ENCODE measurements at regions of chr2 and their contacts with region 1.

Region 1: DNA sequence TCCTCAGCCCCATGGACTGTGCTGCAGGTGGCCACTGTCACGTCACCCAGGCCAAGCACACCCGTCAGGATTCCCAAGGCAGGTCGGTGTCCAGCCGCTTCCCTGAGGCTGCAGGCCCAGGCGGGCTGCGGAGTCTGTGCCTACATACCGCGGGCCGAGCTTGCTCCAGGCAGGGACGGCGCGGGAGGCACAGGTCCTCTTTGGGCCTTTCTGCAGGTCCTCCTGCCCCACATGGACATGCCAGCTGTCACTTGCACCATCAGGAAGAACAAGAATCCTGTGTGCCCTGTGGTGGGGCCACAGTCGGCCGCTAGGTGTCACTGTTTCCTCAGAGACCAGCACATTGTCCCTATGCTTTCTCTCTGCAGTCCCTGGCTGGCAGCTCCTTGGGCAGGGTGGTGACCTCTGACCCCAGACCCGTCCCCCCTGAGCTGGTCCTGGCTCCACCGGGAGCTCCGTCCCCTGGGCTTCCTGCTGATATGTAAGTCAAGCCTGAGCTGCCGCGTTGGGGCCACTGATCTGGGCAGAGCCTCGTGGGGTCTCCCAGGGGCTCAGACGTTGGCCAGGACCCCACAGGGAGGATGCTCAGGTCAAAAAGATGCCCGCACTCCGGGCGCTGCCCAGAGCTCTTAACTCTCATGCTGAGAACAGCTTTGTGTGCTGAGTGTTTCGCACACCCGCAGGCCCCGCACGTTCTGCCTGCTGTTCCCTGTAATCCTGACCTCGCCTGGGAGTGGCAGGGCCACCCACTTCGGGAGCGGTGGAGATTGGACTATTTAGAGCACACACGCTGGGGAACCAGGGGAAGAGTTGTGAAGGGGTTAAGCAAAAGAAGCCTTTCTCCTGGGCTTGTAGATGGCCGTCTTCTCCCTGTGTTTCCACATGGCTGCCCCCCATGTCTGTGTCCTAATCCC is 17.3 kb upstream of the AGXT start:
- DNase-seq: no peak
- H3K4me3 ChIP-seq: no peak overlapping the region
- H3K27me3 ChIP-seq: no peaks in the 10 kb centered on the region
- CTCF ChIP-seq: peak; percentile 94

Region 2: DNA sequence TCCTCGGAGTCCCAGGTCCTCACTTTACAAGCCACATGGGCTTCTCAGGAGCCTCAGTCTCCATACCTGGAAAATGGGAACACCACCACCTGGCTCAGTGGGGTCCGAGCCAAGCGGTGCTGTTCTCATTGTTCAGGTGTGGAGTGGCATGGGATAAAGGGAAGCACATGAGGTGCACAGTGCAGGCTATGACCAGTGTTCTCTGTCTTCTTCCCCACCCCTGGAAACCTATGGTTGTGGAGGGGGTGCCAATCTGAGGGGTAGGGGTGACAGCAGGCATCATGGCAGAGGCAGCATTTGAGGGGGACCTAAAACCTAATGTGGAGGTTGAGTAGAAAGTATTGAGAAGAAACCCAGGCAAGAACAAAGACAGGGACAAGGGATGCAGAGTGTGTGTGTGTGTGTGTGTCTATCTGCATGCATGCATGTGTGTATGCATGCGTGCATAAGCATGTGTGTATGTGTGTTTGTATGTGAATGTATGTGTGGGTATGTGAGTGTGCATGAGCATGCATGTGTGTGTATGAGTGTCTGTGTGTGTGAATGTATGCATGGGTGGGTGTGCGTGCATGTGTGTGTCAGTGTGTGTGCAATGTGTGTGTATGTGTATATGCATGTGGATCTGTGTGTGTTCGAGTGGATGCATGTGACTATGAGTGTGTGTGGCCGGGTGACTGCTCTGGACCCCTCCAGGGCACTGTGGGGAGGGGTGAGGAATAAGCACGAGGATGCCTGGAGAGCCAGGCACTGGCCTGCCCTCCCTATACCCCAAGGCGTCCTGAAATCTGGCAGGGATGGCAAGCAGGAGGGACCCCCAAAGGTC is 35.4 kb before region 1 on chr2:
- CTCF ChIA-PET with region 1: no interaction called
- POLR2A ChIA-PET with region 1: no interaction called
- DNase-seq: no peak
- H3K4me3 ChIP-seq: no peak overlapping the region
- H3K27me3 ChIP-seq: peaks cover 10% of the 10 kb centered on the region
- CTCF ChIP-seq: no peak

Region 3: GRCh38 chr2:240861554-240861953 is 10.2 kb after region 1 on chr2:
- CTCF ChIA-PET with region 1: interaction called, 18 read pairs
- POLR2A ChIA-PET with region 1: no interaction called
- DNase-seq: no peak
- H3K4me3 ChIP-seq: no peak overlapping the region
- H3K27me3 ChIP-seq: peaks cover 8% of the 10 kb centered on the region
- CTCF ChIP-seq: no peak

Region 4: GRCh38 chr2:240868286-240869108 is 17.2 kb after region 1 on chr2 and contains the start of gene AGXT:
- CTCF ChIA-PET with region 1: interaction called, 17 read pairs
- POLR2A ChIA-PET with region 1: no interaction called
- DNase-seq: peak; percentile 14
- H3K4me3 ChIP-seq: no peak within 1 kb of the TSS
- H3K27me3 ChIP-seq: peaks cover 4% of the 10 kb centered on the region
- CTCF ChIP-seq: no peak
- polyA plus RNA-seq, gene AGXT: not detected in 2 replicates

Region 5: GRCh38 chr2:241417626-241418025 is 566.3 kb after region 1 on chr2:
- CTCF ChIA-PET with region 1: no interaction called
- POLR2A ChIA-PET with region 1: no interaction called
- DNase-seq: no peak
- H3K4me3 ChIP-seq: no peak overlapping the region
- H3K27me3 ChIP-seq: no peaks in the 10 kb centered on the region
- CTCF ChIP-seq: no peak